CD4-positive, alpha-beta T cell (primary cell): ENCODE measurements at regions of chr22 and their contacts with region 1.

Region 1: DNA sequence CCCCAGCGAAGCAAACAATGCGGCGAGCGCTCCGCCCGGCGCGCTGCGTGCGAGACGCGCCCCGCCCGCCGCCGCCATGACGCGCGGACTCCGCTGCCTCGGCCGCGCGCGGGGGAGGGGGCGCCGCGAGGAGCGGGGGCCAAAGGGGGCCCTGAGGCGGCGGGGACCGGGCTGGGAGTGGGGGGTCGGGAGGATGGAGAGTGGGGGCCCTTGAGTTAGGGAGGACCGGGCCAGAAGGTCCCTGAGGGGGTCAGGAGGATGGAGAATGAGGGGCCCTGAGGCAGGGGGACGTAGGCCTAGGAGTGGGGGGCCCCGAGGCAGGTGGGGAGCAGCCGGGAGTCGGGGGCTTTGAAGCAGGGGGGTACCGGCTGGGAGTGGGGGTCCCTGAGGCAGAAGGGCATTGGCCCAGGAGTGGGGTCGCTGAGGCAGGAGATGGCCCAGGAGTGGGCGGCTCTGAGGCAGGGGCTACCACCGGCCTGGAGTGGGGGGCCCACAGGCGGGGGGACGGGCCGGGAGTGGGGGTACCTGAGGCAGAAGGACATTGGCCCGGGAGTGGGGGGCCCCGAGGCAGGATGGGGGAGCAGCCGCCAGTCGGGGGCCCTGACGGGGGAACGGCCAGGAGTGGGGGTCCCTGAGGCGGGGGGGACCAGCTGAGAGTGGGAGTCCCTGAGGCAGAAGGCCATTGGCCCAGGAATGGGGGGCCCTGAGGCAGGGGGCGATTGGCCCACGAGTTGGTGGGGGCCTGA is at the start of gene BRD1:
- DNase-seq: peak in 11 of 14 experiments; percentile 37 to 87 (median 64)
- ATAC-seq: peak; percentile 56
- H3K4me3 ChIP-seq: peak within 1 kb of the TSS; percentile 82
- H3K4me3 Mint-ChIP-seq: peak within 1 kb of the TSS; percentile 98
- H3K27ac ChIP-seq: peak within 1 kb of the TSS; percentile 73 to 80
- H3K27ac Mint-ChIP-seq: peak within 1 kb of the TSS; percentile 97
- H3K4me1 ChIP-seq: peaks cover 63% of the 10 kb centered on the region
- H3K4me1 Mint-ChIP-seq: peaks cover 46% of the 10 kb centered on the region
- H3K27me3 ChIP-seq: no peaks in the 10 kb centered on the region
- H3K27me3 Mint-ChIP-seq: no peaks in the 10 kb centered on the region
- CTCF ChIP-seq: no peak
- total RNA-seq, gene BRD1: 129 to 130 TPM

Region 2: DNA sequence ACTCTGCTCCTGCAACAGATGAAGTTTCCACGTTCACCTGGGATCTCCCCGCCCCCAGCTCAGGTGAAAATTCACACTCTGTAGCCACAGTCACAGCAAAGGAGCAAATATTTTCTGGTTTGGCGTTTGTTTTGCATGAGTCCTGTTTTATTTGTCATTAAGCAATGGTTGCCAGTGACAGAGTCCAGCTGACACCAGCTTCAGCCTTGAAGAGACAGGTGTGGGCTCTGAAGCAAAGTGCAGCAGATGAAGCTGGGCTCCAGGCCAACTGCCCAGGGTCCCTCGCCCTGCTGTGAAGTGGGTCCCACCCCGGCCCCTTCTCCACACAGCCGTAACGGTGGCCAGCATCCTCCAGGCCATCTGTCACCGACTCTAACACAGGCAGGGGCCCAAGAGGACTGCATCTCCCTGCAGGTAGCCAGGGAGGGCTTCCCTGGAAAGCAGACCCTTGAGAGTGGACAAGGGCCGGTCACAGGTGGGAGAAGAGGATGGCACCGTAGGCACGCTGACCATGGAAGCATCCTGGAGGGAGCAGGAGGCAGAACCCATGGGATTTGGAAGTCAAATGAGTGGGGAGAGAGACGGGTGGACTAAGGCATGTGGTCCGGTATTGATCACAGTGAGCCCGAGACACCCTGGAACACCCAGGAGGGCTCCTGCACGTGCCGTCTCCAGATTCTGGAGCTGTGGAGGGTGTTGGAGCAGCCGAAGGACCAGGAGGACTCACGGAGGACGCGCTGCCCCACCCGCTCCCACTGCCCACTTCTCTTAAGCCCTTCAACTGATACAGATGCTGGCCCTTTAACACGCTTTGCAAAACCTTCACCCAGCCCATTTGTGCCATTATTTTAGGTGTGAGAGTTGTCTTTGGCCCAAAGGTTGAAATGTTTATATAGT is 294.9 kb before region 1 on chr22:
- CTCF ChIA-PET with region 1: no interaction called
- POLR2A ChIA-PET with region 1: no interaction called
- intact Hi-C with region 1: no loop called
- DNase-seq: peak in 1 of 14 experiments; percentile 8
- ATAC-seq: no peak
- H3K4me3 ChIP-seq: no peak overlapping the region
- H3K4me3 Mint-ChIP-seq: no peak overlapping the region
- H3K27ac ChIP-seq: no peak overlapping the region
- H3K27ac Mint-ChIP-seq: no peak overlapping the region
- H3K4me1 ChIP-seq: no peaks in the 10 kb centered on the region
- H3K4me1 Mint-ChIP-seq: no peaks in the 10 kb centered on the region
- H3K27me3 ChIP-seq: peaks cover 0 to 2% of the 10 kb centered on the region in 2 experiments
- H3K27me3 Mint-ChIP-seq: no peaks in the 10 kb centered on the region
- CTCF ChIP-seq: no peak

Region 3: GRCh38 chr22:49676783-49677494 is 151.1 kb before region 1 on chr22:
- CTCF ChIA-PET with region 1: no interaction called
- POLR2A ChIA-PET with region 1: no interaction called
- intact Hi-C with region 1: no loop called
- DNase-seq: peak in 2 of 14 experiments; percentile 6 to 29
- ATAC-seq: no peak
- H3K4me3 ChIP-seq: no peak overlapping the region
- H3K4me3 Mint-ChIP-seq: no peak overlapping the region
- H3K27ac ChIP-seq: no peak overlapping the region
- H3K27ac Mint-ChIP-seq: peak overlapping the region; percentile 49
- H3K4me1 ChIP-seq: peaks cover 8% of the 10 kb centered on the region
- H3K4me1 Mint-ChIP-seq: peaks cover 10% of the 10 kb centered on the region
- H3K27me3 ChIP-seq: peaks cover under 1 to 3% of the 10 kb centered on the region in 2 experiments
- H3K27me3 Mint-ChIP-seq: peaks cover 2% of the 10 kb centered on the region
- CTCF ChIP-seq: no peak

Region 4: DNA sequence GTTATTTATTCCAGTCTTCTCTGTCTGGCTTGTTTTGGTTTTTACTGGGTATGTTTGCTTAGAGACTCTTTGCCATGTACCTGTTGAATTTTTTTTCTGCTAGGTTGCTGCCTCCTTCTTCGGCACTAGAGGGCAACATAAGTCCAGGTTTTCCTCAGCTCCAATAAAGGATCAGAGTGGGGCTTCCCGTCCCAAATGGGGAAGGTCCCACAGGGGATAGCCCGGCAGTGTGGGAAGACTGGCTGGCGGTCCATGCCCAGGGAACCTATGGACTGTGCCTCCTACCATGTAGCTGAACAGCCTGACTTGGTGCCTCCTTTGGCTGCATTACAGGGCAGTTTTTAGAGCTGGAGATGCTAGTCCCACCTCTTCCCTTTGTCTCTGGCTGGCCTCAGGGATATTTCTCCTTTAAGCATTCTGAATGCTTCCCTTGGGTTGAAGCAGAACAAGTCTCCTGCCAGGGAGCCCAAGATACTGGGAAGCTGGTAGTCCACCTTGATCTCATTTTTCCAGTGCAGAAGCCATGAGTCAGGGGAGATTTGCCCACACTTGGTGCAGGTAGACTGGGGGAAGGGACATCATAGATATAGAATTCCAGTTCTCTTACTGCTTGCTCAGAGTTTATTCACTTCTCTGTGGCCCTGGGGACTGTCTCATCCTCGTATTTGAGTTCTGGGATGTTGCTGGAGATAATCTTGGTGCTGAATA is 60.5 kb before region 1 on chr22:
- CTCF ChIA-PET with region 1: no interaction called
- POLR2A ChIA-PET with region 1: no interaction called
- intact Hi-C with region 1: loop called in 1 of 2 experiments (anchors 2 kb)
- DNase-seq: peak in 6 of 14 experiments; percentile 14 to 75 (median 54)
- ATAC-seq: peak; percentile 59
- H3K4me3 ChIP-seq: no peak overlapping the region
- H3K4me3 Mint-ChIP-seq: no peak overlapping the region
- H3K27ac ChIP-seq: no peak overlapping the region
- H3K27ac Mint-ChIP-seq: no peak overlapping the region
- H3K4me1 ChIP-seq: peaks cover 13% of the 10 kb centered on the region
- H3K4me1 Mint-ChIP-seq: no peaks in the 10 kb centered on the region
- H3K27me3 ChIP-seq: no peaks in the 10 kb centered on the region
- H3K27me3 Mint-ChIP-seq: no peaks in the 10 kb centered on the region
- CTCF ChIP-seq: peak; percentile 82

Region 5: DNA sequence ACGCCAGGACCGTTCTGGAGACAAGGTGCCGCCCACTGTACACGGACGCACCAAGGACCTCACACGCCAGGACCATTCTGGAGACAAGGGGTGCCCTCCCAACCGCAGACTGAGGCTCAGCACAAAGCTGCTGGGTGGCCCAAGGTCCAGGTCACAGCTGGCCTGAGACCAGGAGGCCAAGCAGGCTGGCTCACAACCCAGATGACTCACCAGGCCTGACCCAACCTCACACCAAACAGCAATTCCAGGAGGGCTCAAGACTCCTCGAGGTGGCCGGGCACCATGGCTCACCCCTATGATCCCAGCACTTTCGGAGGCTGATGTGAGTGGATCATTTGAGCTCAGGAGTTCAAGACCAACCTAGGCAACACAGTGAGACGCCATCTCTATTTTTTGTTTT is 15.2 kb before region 1 on chr22:
- CTCF ChIA-PET with region 1: interaction called, 3 read pairs
- POLR2A ChIA-PET with region 1: interaction called, 9 read pairs
- intact Hi-C with region 1: loop called in 1 of 2 experiments (anchors 2 kb)
- DNase-seq: peak in 1 of 14 experiments; percentile 17
- ATAC-seq: no peak
- H3K4me3 ChIP-seq: no peak overlapping the region
- H3K4me3 Mint-ChIP-seq: peak overlapping the region; percentile 30
- H3K27ac ChIP-seq: no peak overlapping the region
- H3K27ac Mint-ChIP-seq: peak overlapping the region; percentile 44
- H3K4me1 ChIP-seq: peaks cover 83% of the 10 kb centered on the region
- H3K4me1 Mint-ChIP-seq: peaks cover 88% of the 10 kb centered on the region
- H3K27me3 ChIP-seq: no peaks in the 10 kb centered on the region
- H3K27me3 Mint-ChIP-seq: no peaks in the 10 kb centered on the region
- CTCF ChIP-seq: no peak

Region 6: GRCh38 chr22:49852898-49853894 is 25.2 kb after region 1 on chr22 and contains the start of gene ZBED4:
- CTCF ChIA-PET with region 1: no interaction called
- POLR2A ChIA-PET with region 1: interaction called, 9 read pairs
- intact Hi-C with region 1: loop called in 1 of 2 experiments (anchors 2 kb)
- DNase-seq: peak; percentile 93 to 99 (median 98)
- ATAC-seq: peak; percentile 81
- H3K4me3 ChIP-seq: peak within 1 kb of the TSS; percentile 75
- H3K4me3 Mint-ChIP-seq: peak within 1 kb of the TSS; percentile 97
- H3K27ac ChIP-seq: peak within 1 kb of the TSS; percentile 55 to 88
- H3K27ac Mint-ChIP-seq: peak within 1 kb of the TSS; percentile 96
- H3K4me1 ChIP-seq: peaks cover 66% of the 10 kb centered on the region
- H3K4me1 Mint-ChIP-seq: peaks cover 43% of the 10 kb centered on the region
- H3K27me3 ChIP-seq: no peaks in the 10 kb centered on the region
- H3K27me3 Mint-ChIP-seq: peaks cover 3% of the 10 kb centered on the region
- CTCF ChIP-seq: no peak
- total RNA-seq, gene ZBED4: 14.8 to 15.0 TPM

Region 7: GRCh38 chr22:49917974-49918910 is 90.2 kb after region 1 on chr22 and contains the starts of genes ALG12 and CRELD2:
- CTCF ChIA-PET with region 1: no interaction called
- POLR2A ChIA-PET with region 1: interaction called, 7 read pairs
- intact Hi-C with region 1: loop called (anchors 5 kb)
- DNase-seq: peak; percentile 93 to 98 (median 96)
- ATAC-seq: peak; percentile 99
- H3K4me3 ChIP-seq: peak within 1 kb of the TSS; percentile 89
- H3K4me3 Mint-ChIP-seq: peak within 1 kb of the TSS; percentile 95
- H3K27ac ChIP-seq: peak within 1 kb of the TSS; percentile 58 to 83
- H3K27ac Mint-ChIP-seq: peak within 1 kb of the TSS; percentile 85
- H3K4me1 ChIP-seq: peaks cover 24% of the 10 kb centered on the region
- H3K4me1 Mint-ChIP-seq: peaks cover 21% of the 10 kb centered on the region
- H3K27me3 ChIP-seq: no peaks in the 10 kb centered on the region
- H3K27me3 Mint-ChIP-seq: no peaks in the 10 kb centered on the region
- CTCF ChIP-seq: no peak
- total RNA-seq, gene ALG12: 13.5 to 14.6 TPM
- total RNA-seq, gene CRELD2: 21.2 to 23.3 TPM